PC-3 (cell line): ENCODE measurements at regions of chr2 and their contacts with region 1.

Region 1: DNA sequence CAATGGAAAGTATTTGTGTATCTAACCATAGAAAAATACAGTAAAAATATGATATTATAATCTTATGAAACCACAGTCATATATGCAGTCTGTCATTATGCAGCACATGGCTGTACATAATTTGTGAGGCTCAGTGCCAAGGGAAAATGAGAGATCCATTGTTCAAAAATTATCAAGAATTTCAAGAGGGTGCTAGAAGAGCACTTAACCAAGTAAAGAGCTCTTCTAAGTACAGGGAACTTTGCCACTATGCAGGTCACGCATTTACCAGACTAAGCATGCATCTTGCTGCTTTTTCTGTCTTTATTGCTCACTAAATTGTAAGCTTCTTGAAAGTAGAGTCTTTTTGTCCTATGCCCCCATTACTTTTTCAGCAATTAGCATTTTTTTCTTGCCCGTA is 438.0 kb downstream of the LRP1B start:
- DNase-seq: no peak
- ATAC-seq: no peak
- H3K4me3 ChIP-seq: no peak overlapping the region
- H3K27ac ChIP-seq: no peak overlapping the region
- H3K4me1 ChIP-seq: no peaks in the 10 kb centered on the region
- H3K27me3 ChIP-seq: no peaks in the 10 kb centered on the region
- CTCF ChIP-seq: no peak

Region 2: GRCh38 chr2:141490886-141491285 is 201.9 kb before region 1 on chr2:
- CTCF ChIA-PET with region 1: no interaction called
- POLR2A ChIA-PET with region 1: no interaction called
- intact Hi-C with region 1: no loop called
- DNase-seq: peak; percentile 12
- ATAC-seq: peak; percentile 84
- H3K4me3 ChIP-seq: no peak overlapping the region
- H3K27ac ChIP-seq: no peak overlapping the region
- H3K4me1 ChIP-seq: no peaks in the 10 kb centered on the region
- H3K27me3 ChIP-seq: no peaks in the 10 kb centered on the region
- CTCF ChIP-seq: no peak

Region 3: GRCh38 chr2:141666191-141666590 is 26.6 kb before region 1 on chr2:
- CTCF ChIA-PET with region 1: no interaction called
- POLR2A ChIA-PET with region 1: no interaction called
- intact Hi-C with region 1: no loop called
- DNase-seq: no peak
- ATAC-seq: no peak
- H3K4me3 ChIP-seq: no peak overlapping the region
- H3K27ac ChIP-seq: no peak overlapping the region
- H3K4me1 ChIP-seq: no peaks in the 10 kb centered on the region
- H3K27me3 ChIP-seq: no peaks in the 10 kb centered on the region
- CTCF ChIP-seq: no peak

Region 4: DNA sequence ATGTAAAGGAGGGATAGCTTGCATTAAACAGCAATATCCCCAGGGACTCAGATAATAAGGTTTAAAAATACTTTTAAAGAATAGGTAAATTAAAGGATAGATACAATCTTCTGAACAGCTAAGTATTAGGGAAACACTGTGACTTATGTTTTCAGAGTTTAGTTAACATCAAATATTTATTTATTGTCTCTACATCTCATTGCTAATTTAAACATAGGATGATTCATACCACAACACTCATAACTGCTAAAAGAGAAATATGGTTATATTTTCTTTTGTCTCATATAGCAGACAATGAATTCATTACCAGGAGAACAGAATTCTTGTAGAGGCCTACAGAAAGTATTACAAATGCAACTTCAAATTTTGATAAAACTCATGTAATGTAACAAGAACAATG is 125.1 kb after region 1 on chr2:
- CTCF ChIA-PET with region 1: no interaction called
- POLR2A ChIA-PET with region 1: interaction called, 11 read pairs
- intact Hi-C with region 1: no loop called
- DNase-seq: no peak
- ATAC-seq: peak; percentile 75
- H3K4me3 ChIP-seq: no peak overlapping the region
- H3K27ac ChIP-seq: no peak overlapping the region
- H3K4me1 ChIP-seq: no peaks in the 10 kb centered on the region
- H3K27me3 ChIP-seq: no peaks in the 10 kb centered on the region
- CTCF ChIP-seq: no peak